ENCODE measurements at regions of chr19 and their contacts with region 1.

Region 1: GRCh38 chr19:35592226-35592625 is 6.3 kb downstream of the PMIS2 start:
- DNase-seq: peak; percentile 66
- CTCF ChIP-seq: peak; percentile 53

Region 2: DNA sequence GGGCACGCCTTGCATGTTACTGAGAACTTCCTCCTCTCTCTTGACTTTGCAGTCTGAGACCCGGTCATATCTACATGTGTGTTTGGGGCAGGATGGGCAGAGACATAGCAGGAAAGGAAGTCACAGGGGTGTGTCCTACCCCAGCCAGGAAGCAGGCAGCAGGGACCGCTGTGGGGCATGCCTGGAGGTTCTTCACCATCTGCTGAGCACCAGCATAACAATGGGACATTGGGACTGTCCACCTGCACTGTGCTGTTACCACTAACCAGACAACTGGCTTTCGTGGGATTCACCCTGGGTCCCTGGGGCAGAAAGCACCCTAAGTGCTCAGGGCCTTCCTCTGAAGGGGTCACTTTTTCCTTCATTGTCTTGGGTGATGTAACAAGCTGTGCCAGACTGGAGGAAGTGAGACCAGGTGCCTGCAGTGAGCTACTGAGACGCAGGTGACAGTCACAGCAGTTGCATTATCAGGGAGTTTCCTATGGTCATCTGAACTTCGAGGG is 17.7 kb after region 1 on chr19:
- CTCF ChIA-PET with region 1: interaction called, 24 read pairs
- POLR2A ChIA-PET with region 1: no interaction called
- DNase-seq: peak; percentile 65
- CTCF ChIP-seq: no peak

Measured in GM10248 (cell line).